ENCODE measurements at regions of chr1 and their contacts with region 1.

Region 1: GRCh38 chr1:182446033-182446669 is 3.8 kb upstream of the RGSL1 start:
- DNase-seq: peak in 1 of 2 donors; percentile 9
- ATAC-seq: peak; percentile 77

Region 2: DNA sequence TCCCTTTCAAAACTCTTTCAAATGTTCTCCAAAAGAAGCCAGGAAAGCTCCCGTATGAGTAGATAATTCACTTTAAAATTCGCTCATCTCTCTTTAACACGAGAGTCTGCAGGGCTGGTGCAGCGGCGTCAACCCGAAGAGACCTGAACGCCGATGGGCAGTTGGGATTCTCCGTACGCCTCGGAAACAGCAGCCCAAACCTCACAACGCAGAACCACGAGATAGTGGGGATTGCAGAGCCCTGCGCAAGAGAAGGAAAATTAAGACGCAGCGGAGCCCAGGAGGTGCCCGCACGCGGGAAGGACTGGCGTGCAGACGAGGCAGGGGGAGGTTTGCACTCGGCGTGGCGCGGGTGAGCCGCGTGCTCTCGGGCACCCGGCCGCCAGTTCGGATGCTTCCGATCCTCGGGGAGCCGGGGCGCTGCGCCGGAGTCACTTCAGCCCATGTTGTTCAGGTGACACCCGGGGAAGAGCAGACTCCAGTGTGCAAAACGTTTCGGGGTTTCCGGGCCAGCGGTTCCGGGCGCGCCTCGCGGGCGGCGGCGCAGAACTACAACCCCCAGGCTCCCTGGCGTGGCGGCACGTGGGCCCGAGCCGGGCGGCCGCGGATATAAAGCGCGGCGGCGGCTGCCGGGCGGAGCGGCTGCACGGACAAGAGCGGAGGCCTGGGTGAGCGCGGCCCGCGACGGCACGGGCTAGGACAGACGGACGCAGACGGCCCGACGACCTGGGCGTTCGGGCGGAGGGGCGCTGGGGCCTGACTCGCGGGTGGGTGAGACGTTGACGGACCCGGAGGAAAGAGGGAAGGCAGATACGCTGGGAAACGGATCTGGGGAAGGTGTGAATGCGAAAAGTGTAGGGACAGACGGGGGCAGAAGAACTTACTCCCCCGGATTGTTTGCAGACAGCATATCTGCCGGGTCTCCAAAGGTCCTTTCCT is 343.3 kb after region 1 on chr1 and contains the start of gene NPL:
- intact Hi-C with region 1: loop called in 1 of 2 experiments (anchors 5 kb)
- DNase-seq: peak; percentile 77 to 88
- ATAC-seq: peak; percentile 96
- total RNA-seq, gene NPL: 9.4 to 15.4 TPM

Region 3: DNA sequence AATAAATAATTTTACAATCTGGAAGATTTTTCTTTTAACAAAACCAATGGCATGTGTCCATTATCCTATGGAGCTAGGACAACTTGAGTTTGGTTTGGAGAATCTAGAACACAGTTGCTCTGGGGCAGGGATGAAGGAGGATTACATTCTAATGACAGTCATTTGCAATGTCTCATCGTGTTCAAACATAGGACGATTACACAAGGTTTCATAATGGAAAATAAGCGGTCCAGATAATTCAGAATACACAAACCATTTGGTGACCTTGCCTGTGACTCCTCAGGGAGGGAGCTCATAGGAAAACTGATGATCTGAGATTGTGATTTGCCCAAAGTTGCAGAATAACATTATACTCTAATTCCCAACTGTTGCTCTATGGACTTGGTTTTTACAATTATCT is 1331.2 kb after region 1 on chr1:
- intact Hi-C with region 1: no loop called
- DNase-seq: no peak
- ATAC-seq: no peak